T-cell (primary cell): ENCODE measurements at regions of chr4 and their contacts with region 1.

Region 1: GRCh38 chr4:154320521-154320920 is 171.1 kb downstream of the DCHS2 start:
- DNase-seq: no peak
- ATAC-seq: no peak
- H3K4me3 ChIP-seq: no peak overlapping the region
- H3K4me3 Mint-ChIP-seq: no peak overlapping the region
- H3K27ac ChIP-seq: no peak overlapping the region
- H3K27ac Mint-ChIP-seq: no peak overlapping the region
- H3K4me1 ChIP-seq: no peaks in the 10 kb centered on the region
- H3K4me1 Mint-ChIP-seq: no peaks in the 10 kb centered on the region
- H3K27me3 ChIP-seq: peaks cover 0 to 5% of the 10 kb centered on the region in 2 experiments
- H3K27me3 Mint-ChIP-seq: peaks cover 12 to 21% of the 10 kb centered on the region in 2 donors

Region 2: GRCh38 chr4:155802190-155802959 is 1481.9 kb after region 1 on chr4:
- CTCF ChIA-PET with region 1: interaction called in 1 of 2 experiments, 14 read pairs
- POLR2A ChIA-PET with region 1: no interaction called
- DNase-seq: no peak
- ATAC-seq: no peak
- H3K4me3 ChIP-seq: no peak overlapping the region
- H3K4me3 Mint-ChIP-seq: no peak overlapping the region
- H3K27ac ChIP-seq: no peak overlapping the region
- H3K27ac Mint-ChIP-seq: no peak overlapping the region
- H3K4me1 ChIP-seq: no peaks in the 10 kb centered on the region
- H3K4me1 Mint-ChIP-seq: no peaks in the 10 kb centered on the region
- H3K27me3 ChIP-seq: no peaks in the 10 kb centered on the region
- H3K27me3 Mint-ChIP-seq: peaks cover 0 to 3% of the 10 kb centered on the region in 2 donors